CD8-positive, alpha-beta T cell (primary cell): ENCODE measurements at regions of chr13 and their contacts with region 1.

Region 1: DNA sequence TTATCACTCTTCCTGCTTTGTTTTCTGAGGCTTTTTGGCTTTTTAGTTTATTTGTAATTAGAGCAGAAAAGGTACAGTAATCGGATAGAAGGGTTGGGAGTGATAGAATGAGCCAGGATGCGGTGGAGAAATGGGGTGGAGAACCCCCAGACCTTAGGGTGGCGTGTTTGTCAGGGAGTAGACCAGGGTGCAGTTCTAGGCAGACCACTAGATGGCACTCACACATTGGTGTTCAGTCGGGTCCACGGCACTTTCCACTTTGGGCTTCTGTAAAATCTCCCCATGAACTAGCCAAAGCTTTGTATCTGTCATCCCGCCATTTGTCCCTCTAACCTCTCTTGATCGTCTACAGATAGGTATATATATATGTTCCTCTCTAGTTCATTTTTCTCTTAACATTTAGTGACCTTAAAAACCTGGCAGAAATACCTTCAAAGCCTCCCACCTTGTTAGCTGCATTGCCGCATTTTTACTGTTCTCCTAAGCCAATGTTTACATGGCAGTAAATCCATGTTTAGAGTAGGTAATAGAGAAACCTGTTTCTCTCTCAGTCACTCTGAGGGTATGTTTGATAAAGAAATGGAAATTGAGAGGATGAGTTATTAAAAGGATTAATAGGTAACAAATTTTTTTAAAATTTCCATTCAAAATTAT is 154.9 kb downstream of the TM9SF2 start:
- DNase-seq: peak; percentile 71 to 90 (median 86)
- ATAC-seq: peak; percentile 61
- H3K4me3 ChIP-seq: peak overlapping the region; percentile 30 to 32
- H3K4me3 Mint-ChIP-seq: peak overlapping the region; percentile 84
- H3K27ac ChIP-seq: peak overlapping the region; percentile 12 to 22
- H3K27ac Mint-ChIP-seq: peak overlapping the region; percentile 97
- H3K4me1 ChIP-seq: peaks cover 42% of the 10 kb centered on the region
- H3K4me1 Mint-ChIP-seq: peaks cover 47% of the 10 kb centered on the region
- H3K27me3 ChIP-seq: no peaks in the 10 kb centered on the region
- H3K27me3 Mint-ChIP-seq: no peaks in the 10 kb centered on the region
- CTCF ChIP-seq: peak; percentile 92

Region 2: GRCh38 chr13:99237981-99238662 is 418.1 kb before region 1 on chr13:
- CTCF ChIA-PET with region 1: no interaction called
- POLR2A ChIA-PET with region 1: no interaction called
- intact Hi-C with region 1: no loop called
- DNase-seq: peak in 2 of 9 experiments; percentile 55 to 73
- ATAC-seq: peak; percentile 82
- H3K4me3 ChIP-seq: peak overlapping the region; percentile 47 to 49
- H3K4me3 Mint-ChIP-seq: peak overlapping the region; percentile 92
- H3K27ac ChIP-seq: peak overlapping the region; percentile 52 to 82
- H3K27ac Mint-ChIP-seq: peak overlapping the region; percentile 100
- H3K4me1 ChIP-seq: peaks cover 52% of the 10 kb centered on the region
- H3K4me1 Mint-ChIP-seq: peaks cover 73% of the 10 kb centered on the region
- H3K27me3 ChIP-seq: no peaks in the 10 kb centered on the region
- H3K27me3 Mint-ChIP-seq: no peaks in the 10 kb centered on the region
- CTCF ChIP-seq: no peak

Region 3: DNA sequence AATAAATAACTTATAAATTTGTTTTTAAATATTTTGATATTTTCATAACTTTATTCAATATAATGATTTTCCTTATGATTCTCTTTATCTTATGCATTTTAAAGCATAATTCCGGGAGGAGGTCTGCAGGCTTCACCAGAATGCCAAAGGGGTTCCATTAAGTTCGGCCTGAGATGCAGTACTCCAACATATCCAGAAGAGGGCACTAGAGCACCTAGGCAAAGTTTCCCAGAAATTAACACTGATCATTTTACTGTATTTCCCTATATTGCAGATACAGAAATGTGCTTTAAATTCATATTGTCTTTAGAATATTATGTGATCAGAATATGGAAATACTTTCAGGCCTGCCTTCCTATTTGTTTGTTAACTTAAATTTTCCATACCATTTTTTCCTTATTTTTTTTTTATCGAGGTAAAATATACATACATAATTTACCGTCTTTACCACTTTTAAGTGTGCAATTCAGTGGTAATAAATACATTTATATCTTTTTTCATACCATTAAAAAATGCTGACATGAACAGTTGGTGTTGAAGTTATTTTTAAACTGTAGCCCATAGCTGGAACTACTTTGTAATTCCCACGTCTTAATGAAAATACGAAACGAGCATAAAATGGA is 213.8 kb before region 1 on chr13:
- CTCF ChIA-PET with region 1: interaction called, 4 read pairs
- POLR2A ChIA-PET with region 1: no interaction called
- intact Hi-C with region 1: loop called (anchors 1 to 5 kb)
- DNase-seq: peak in 7 of 9 experiments; percentile 40 to 78 (median 59)
- ATAC-seq: peak; percentile 92
- H3K4me3 ChIP-seq: no peak overlapping the region
- H3K4me3 Mint-ChIP-seq: no peak overlapping the region
- H3K27ac ChIP-seq: no peak overlapping the region
- H3K27ac Mint-ChIP-seq: no peak overlapping the region
- H3K4me1 ChIP-seq: peaks cover 4% of the 10 kb centered on the region
- H3K4me1 Mint-ChIP-seq: peaks cover 5% of the 10 kb centered on the region
- H3K27me3 ChIP-seq: no peaks in the 10 kb centered on the region
- H3K27me3 Mint-ChIP-seq: no peaks in the 10 kb centered on the region
- CTCF ChIP-seq: peak; percentile 99

Region 4: DNA sequence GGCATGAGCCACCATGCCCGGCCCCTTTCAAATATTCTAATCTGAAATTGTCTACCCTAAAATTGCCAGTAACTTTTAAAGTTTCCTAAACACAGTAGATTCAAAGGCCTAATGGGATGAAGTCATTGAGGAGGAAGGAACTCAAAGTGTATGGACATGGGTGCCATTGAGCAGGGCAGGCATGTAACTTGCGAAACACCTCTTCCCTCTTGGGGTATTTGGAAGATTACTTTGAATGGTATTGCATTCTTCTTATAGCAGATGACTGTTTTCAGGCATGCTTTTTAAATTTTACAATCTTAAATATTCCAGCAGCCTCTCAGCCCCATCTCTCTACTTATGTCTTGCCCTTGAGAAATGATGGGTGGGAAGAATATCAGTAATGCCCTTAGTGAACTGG is 133.9 kb before region 1 on chr13:
- CTCF ChIA-PET with region 1: no interaction called
- POLR2A ChIA-PET with region 1: no interaction called
- intact Hi-C with region 1: no loop called
- DNase-seq: no peak
- ATAC-seq: no peak
- H3K4me3 ChIP-seq: no peak overlapping the region
- H3K4me3 Mint-ChIP-seq: no peak overlapping the region
- H3K27ac ChIP-seq: no peak overlapping the region
- H3K27ac Mint-ChIP-seq: no peak overlapping the region
- H3K4me1 ChIP-seq: peaks cover 12% of the 10 kb centered on the region
- H3K4me1 Mint-ChIP-seq: peaks cover 34% of the 10 kb centered on the region
- H3K27me3 ChIP-seq: no peaks in the 10 kb centered on the region
- H3K27me3 Mint-ChIP-seq: no peaks in the 10 kb centered on the region
- CTCF ChIP-seq: no peak

Region 5: GRCh38 chr13:99758460-99759162 is 102.4 kb after region 1 on chr13:
- CTCF ChIA-PET with region 1: no interaction called
- POLR2A ChIA-PET with region 1: no interaction called
- intact Hi-C with region 1: no loop called
- DNase-seq: peak in 1 of 9 experiments; percentile 21
- ATAC-seq: no peak
- H3K4me3 ChIP-seq: no peak overlapping the region
- H3K4me3 Mint-ChIP-seq: no peak overlapping the region
- H3K27ac ChIP-seq: no peak overlapping the region
- H3K27ac Mint-ChIP-seq: no peak overlapping the region
- H3K4me1 ChIP-seq: no peaks in the 10 kb centered on the region
- H3K4me1 Mint-ChIP-seq: peaks cover 12% of the 10 kb centered on the region
- H3K27me3 ChIP-seq: no peaks in the 10 kb centered on the region
- H3K27me3 Mint-ChIP-seq: no peaks in the 10 kb centered on the region
- CTCF ChIP-seq: no peak

Region 6: DNA sequence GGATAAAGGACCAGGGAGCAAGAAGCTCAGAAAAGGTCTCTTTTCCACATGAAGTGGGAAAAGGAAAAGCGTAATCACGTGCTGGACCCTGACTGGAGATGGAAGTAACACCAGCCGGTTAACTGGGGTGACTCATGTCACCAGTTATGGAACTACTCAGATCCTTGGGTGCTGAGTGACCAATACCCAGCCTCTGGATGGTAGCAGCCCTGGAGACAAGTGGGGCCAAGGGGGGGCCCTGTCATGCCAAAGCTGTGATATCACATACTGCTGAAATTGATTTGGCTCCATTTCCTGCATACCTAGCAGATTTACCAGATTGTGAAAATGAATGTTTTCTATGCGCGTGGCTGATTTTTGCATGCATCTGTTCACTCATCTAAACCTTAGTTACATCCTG is 156.4 kb after region 1 on chr13:
- CTCF ChIA-PET with region 1: interaction called, 7 read pairs
- POLR2A ChIA-PET with region 1: interaction called, 19 read pairs
- intact Hi-C with region 1: no loop called
- DNase-seq: no peak
- ATAC-seq: no peak
- H3K4me3 ChIP-seq: no peak overlapping the region
- H3K4me3 Mint-ChIP-seq: no peak overlapping the region
- H3K27ac ChIP-seq: no peak overlapping the region
- H3K27ac Mint-ChIP-seq: no peak overlapping the region
- H3K4me1 ChIP-seq: peaks cover under 1% of the 10 kb centered on the region
- H3K4me1 Mint-ChIP-seq: peaks cover 11% of the 10 kb centered on the region
- H3K27me3 ChIP-seq: no peaks in the 10 kb centered on the region
- H3K27me3 Mint-ChIP-seq: no peaks in the 10 kb centered on the region
- CTCF ChIP-seq: no peak

Region 7: GRCh38 chr13:99969919-99970621 is 313.9 kb after region 1 on chr13:
- CTCF ChIA-PET with region 1: interaction called, 5 read pairs
- POLR2A ChIA-PET with region 1: no interaction called
- intact Hi-C with region 1: loop called in 1 of 2 experiments (anchors 5 kb)
- DNase-seq: peak in 5 of 9 experiments; percentile 46 to 63 (median 56)
- ATAC-seq: peak; percentile 57
- H3K4me3 ChIP-seq: peak overlapping the region; percentile 29 to 47
- H3K4me3 Mint-ChIP-seq: peak overlapping the region; percentile 82
- H3K27ac ChIP-seq: no peak overlapping the region
- H3K27ac Mint-ChIP-seq: no peak overlapping the region
- H3K4me1 ChIP-seq: peaks cover 26% of the 10 kb centered on the region
- H3K4me1 Mint-ChIP-seq: peaks cover 25% of the 10 kb centered on the region
- H3K27me3 ChIP-seq: peaks cover 67 to 70% of the 10 kb centered on the region in 2 experiments
- H3K27me3 Mint-ChIP-seq: peaks cover 67% of the 10 kb centered on the region
- CTCF ChIP-seq: no peak

Region 8: GRCh38 chr13:100514788-100515409 is 858.7 kb after region 1 on chr13:
- CTCF ChIA-PET with region 1: interaction called, 119 read pairs
- POLR2A ChIA-PET with region 1: interaction called, 9 read pairs
- intact Hi-C with region 1: loop called (anchors 1 kb)
- DNase-seq: peak; percentile 29 to 82 (median 74)
- ATAC-seq: peak; percentile 96
- H3K4me3 ChIP-seq: no peak overlapping the region
- H3K4me3 Mint-ChIP-seq: no peak overlapping the region
- H3K27ac ChIP-seq: no peak overlapping the region
- H3K27ac Mint-ChIP-seq: no peak overlapping the region
- H3K4me1 ChIP-seq: no peaks in the 10 kb centered on the region
- H3K4me1 Mint-ChIP-seq: peaks cover 13% of the 10 kb centered on the region
- H3K27me3 ChIP-seq: no peaks in the 10 kb centered on the region
- H3K27me3 Mint-ChIP-seq: no peaks in the 10 kb centered on the region
- CTCF ChIP-seq: peak; percentile 97

Region 9: DNA sequence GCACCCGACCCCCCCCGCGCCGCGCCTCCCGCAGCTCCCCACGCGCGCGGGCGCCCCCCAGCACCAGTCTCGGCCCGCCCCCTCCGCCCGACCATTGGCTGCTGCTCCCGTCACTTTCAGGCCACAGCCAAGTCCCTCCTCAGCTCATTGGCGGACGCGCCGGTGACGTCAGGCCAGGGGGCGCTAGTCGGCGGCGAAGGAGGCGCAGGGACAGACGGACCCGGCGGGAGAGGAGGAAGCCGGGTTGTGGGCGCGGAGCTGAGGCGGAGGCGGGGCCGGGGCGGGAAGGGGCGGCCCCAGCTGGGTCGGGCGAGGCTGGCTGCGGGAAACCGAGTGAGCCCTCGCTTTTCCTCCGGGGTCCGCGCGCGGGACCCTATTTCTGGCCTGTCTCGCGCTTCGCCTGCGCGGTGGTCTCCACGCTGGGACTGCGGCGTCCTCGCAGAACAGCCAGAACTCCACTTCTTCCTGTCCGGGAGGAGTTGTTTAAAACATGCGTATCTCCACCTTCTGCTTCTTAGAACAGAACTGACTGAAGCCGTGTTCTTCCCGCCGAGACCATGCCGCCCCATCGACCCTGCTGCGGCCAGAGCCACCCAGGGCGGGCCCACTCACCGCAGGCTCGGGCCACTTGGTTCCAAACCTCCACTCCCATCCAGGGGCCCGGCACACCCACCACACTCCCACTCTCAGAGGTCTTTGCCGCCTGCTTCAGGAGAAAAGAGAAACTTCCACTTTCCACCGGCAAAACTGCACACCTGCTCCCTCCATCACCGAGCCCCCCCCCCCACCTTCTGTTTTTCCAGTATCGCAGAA is 1018.8 kb after region 1 on chr13:
- CTCF ChIA-PET with region 1: interaction called, 3 read pairs
- POLR2A ChIA-PET with region 1: interaction called, 3 read pairs
- intact Hi-C with region 1: loop called in 1 of 2 experiments (anchors 5 kb)
- DNase-seq: peak; percentile 99 to 100 (median 100)
- ATAC-seq: peak; percentile 92
- H3K4me3 ChIP-seq: peak overlapping the region; percentile 88 to 98
- H3K4me3 Mint-ChIP-seq: peak overlapping the region; percentile 95
- H3K27ac ChIP-seq: peak overlapping the region; percentile 55 to 78
- H3K27ac Mint-ChIP-seq: peak overlapping the region; percentile 89
- H3K4me1 ChIP-seq: peaks cover 14% of the 10 kb centered on the region
- H3K4me1 Mint-ChIP-seq: peaks cover 29% of the 10 kb centered on the region
- H3K27me3 ChIP-seq: no peaks in the 10 kb centered on the region
- H3K27me3 Mint-ChIP-seq: no peaks in the 10 kb centered on the region
- CTCF ChIP-seq: no peak